ENCODE measurements at regions of chr1 and their contacts with region 1.

Region 1: GRCh38 chr1:150561974-150562445 is 12.8 kb downstream of the ADAMTSL4 start:
- DNase-seq: peak; percentile 94
- ATAC-seq: peak; percentile 48
- H3K4me3 Mint-ChIP-seq: peak overlapping the region; percentile 88
- H3K27ac Mint-ChIP-seq: peak overlapping the region; percentile 99
- H3K4me1 Mint-ChIP-seq: peaks cover 47% of the 10 kb centered on the region
- H3K27me3 Mint-ChIP-seq: no peaks in the 10 kb centered on the region
- CTCF ChIP-seq: no peak

Region 2: GRCh38 chr1:150332651-150333290 is 229.2 kb before region 1 on chr1:
- CTCF ChIA-PET with region 1: no interaction called
- POLR2A ChIA-PET with region 1: no interaction called
- intact Hi-C with region 1: no loop called
- DNase-seq: no peak
- ATAC-seq: no peak
- H3K4me3 Mint-ChIP-seq: no peak overlapping the region
- H3K27ac Mint-ChIP-seq: no peak overlapping the region
- H3K4me1 Mint-ChIP-seq: peaks cover 2% of the 10 kb centered on the region
- H3K27me3 Mint-ChIP-seq: no peaks in the 10 kb centered on the region
- CTCF ChIP-seq: no peak

Region 3: GRCh38 chr1:150429805-150430204 is 132.2 kb before region 1 on chr1:
- CTCF ChIA-PET with region 1: no interaction called
- POLR2A ChIA-PET with region 1: no interaction called
- intact Hi-C with region 1: no loop called
- DNase-seq: no peak
- ATAC-seq: peak; percentile 47
- H3K4me3 Mint-ChIP-seq: no peak overlapping the region
- H3K27ac Mint-ChIP-seq: no peak overlapping the region
- H3K4me1 Mint-ChIP-seq: peaks cover 10% of the 10 kb centered on the region
- H3K27me3 Mint-ChIP-seq: no peaks in the 10 kb centered on the region
- CTCF ChIP-seq: peak; percentile 45

Region 4: GRCh38 chr1:150486964-150487762 is 74.8 kb before region 1 on chr1 and contains the start of gene TARS2:
- CTCF ChIA-PET with region 1: interaction called, 12 read pairs
- POLR2A ChIA-PET with region 1: interaction called, 5 read pairs
- intact Hi-C with region 1: no loop called
- DNase-seq: peak; percentile 98
- ATAC-seq: peak; percentile 100
- H3K4me3 Mint-ChIP-seq: peak within 1 kb of the TSS; percentile 98
- H3K27ac Mint-ChIP-seq: peak within 1 kb of the TSS; percentile 99
- H3K4me1 Mint-ChIP-seq: peaks cover 18% of the 10 kb centered on the region
- H3K27me3 Mint-ChIP-seq: no peaks in the 10 kb centered on the region
- CTCF ChIP-seq: no peak
- total RNA-seq, gene TARS2: 43.3 to 44.5 TPM

Region 5: GRCh38 chr1:150525348-150525747 is 36.7 kb before region 1 on chr1:
- CTCF ChIA-PET with region 1: no interaction called
- POLR2A ChIA-PET with region 1: no interaction called
- intact Hi-C with region 1: no loop called
- DNase-seq: no peak
- ATAC-seq: no peak
- H3K4me3 Mint-ChIP-seq: no peak overlapping the region
- H3K27ac Mint-ChIP-seq: no peak overlapping the region
- H3K4me1 Mint-ChIP-seq: no peaks in the 10 kb centered on the region
- H3K27me3 Mint-ChIP-seq: no peaks in the 10 kb centered on the region
- CTCF ChIP-seq: no peak

Region 6: GRCh38 chr1:150535511-150536281 is 26.3 kb before region 1 on chr1:
- CTCF ChIA-PET with region 1: interaction called, 10 read pairs
- POLR2A ChIA-PET with region 1: no interaction called
- intact Hi-C with region 1: no loop called
- DNase-seq: no peak
- ATAC-seq: no peak
- H3K4me3 Mint-ChIP-seq: no peak overlapping the region
- H3K27ac Mint-ChIP-seq: no peak overlapping the region
- H3K4me1 Mint-ChIP-seq: no peaks in the 10 kb centered on the region
- H3K27me3 Mint-ChIP-seq: no peaks in the 10 kb centered on the region
- CTCF ChIP-seq: no peak

Region 7: GRCh38 chr1:150578965-150579798 is 17.2 kb after region 1 on chr1 and contains the start of gene MCL1:
- CTCF ChIA-PET with region 1: interaction called, 237 read pairs
- POLR2A ChIA-PET with region 1: interaction called, 542 read pairs
- intact Hi-C with region 1: loop called (anchors 2 kb)
- DNase-seq: peak; percentile 94
- ATAC-seq: peak; percentile 84
- H3K4me3 Mint-ChIP-seq: peak within 1 kb of the TSS; percentile 97
- H3K27ac Mint-ChIP-seq: peak within 1 kb of the TSS; percentile 97
- H3K4me1 Mint-ChIP-seq: peaks cover 29% of the 10 kb centered on the region
- H3K27me3 Mint-ChIP-seq: no peaks in the 10 kb centered on the region
- CTCF ChIP-seq: no peak
- total RNA-seq, gene MCL1: 207 TPM

Region 8: GRCh38 chr1:150629115-150629928 is 67.3 kb after region 1 on chr1 and contains the start of gene ENSA:
- CTCF ChIA-PET with region 1: interaction called, 324 read pairs
- POLR2A ChIA-PET with region 1: interaction called, 678 read pairs
- intact Hi-C with region 1: loop called (anchors 2 kb)
- DNase-seq: peak; percentile 98
- ATAC-seq: peak; percentile 89
- H3K4me3 Mint-ChIP-seq: no peak within 1 kb of the TSS
- H3K27ac Mint-ChIP-seq: no peak within 1 kb of the TSS
- H3K4me1 Mint-ChIP-seq: peaks cover 47% of the 10 kb centered on the region
- H3K27me3 Mint-ChIP-seq: no peaks in the 10 kb centered on the region
- CTCF ChIP-seq: no peak
- total RNA-seq, gene ENSA: 177 to 182 TPM

Region 9: DNA sequence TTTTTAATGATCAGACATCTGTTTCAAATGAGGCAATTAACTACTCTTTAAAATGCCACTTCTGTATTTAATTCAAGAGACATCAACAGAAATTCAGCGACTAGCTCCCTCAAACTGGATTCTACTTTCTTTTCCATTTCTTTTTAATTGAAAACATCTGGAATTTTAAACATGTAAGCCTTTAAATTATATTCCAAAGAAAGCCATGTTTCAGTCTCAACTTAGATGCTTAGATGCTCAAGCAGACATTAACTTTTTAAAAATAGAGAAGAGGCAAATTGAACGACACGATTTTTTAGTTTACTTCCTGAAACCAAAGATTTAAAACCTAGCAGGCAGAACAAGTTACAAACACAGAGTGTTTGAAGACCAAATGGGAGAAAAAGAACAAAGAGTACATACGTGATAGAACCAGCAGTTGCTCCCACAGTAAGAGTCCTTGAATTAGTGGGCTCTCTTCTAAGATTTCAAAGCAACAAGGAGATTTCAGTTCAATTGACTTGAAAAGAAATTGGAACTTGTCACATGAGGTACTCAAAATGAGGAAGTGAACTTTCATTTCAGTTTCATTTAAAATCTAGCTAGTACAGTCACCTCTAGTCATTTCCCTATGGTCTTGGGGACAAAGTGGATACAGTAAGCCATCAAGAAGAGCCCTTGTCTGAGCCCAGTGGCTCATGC is 203.4 kb after region 1 on chr1 and contains the start of gene CTSS:
- CTCF ChIA-PET with region 1: interaction called, 10 read pairs
- POLR2A ChIA-PET with region 1: interaction called, 4 read pairs
- intact Hi-C with region 1: no loop called
- DNase-seq: no peak
- ATAC-seq: peak; percentile 91
- H3K4me3 Mint-ChIP-seq: peak within 1 kb of the TSS; percentile 90
- H3K27ac Mint-ChIP-seq: peak within 1 kb of the TSS; percentile 95
- H3K4me1 Mint-ChIP-seq: peaks cover 34% of the 10 kb centered on the region
- H3K27me3 Mint-ChIP-seq: no peaks in the 10 kb centered on the region
- CTCF ChIP-seq: no peak
- total RNA-seq, gene CTSS: 36.7 to 38.4 TPM

Region 10: GRCh38 chr1:150798525-150798924 is 236.5 kb after region 1 on chr1:
- CTCF ChIA-PET with region 1: no interaction called
- POLR2A ChIA-PET with region 1: no interaction called
- intact Hi-C with region 1: no loop called
- DNase-seq: no peak
- ATAC-seq: no peak
- H3K4me3 Mint-ChIP-seq: no peak overlapping the region
- H3K27ac Mint-ChIP-seq: no peak overlapping the region
- H3K4me1 Mint-ChIP-seq: no peaks in the 10 kb centered on the region
- H3K27me3 Mint-ChIP-seq: no peaks in the 10 kb centered on the region
- CTCF ChIP-seq: no peak